Activated naive CD4-positive, alpha-beta T cell treated with anti-CD3 and anti-CD28 coated beads for 36 hours (primary cell): ENCODE measurements at regions of chr9 and their contacts with region 1.

Region 1: GRCh38 chr9:104961238-104961637 is 33.3 kb upstream of the ABCA1 start:
- DNase-seq: peak; percentile 92
- H3K4me3 Mint-ChIP-seq: peak overlapping the region; percentile 62
- H3K27ac Mint-ChIP-seq: peak overlapping the region; percentile 96
- H3K4me1 Mint-ChIP-seq: peaks cover 39% of the 10 kb centered on the region
- H3K27me3 Mint-ChIP-seq: no peaks in the 10 kb centered on the region

Region 2: GRCh38 chr9:104941597-104941996 is 19.6 kb before region 1 on chr9:
- CTCF ChIA-PET with region 1: no interaction called
- intact Hi-C with region 1: loop called (anchors 1 kb)
- DNase-seq: no peak
- H3K4me3 Mint-ChIP-seq: no peak overlapping the region
- H3K27ac Mint-ChIP-seq: peak overlapping the region; percentile 21
- H3K4me1 Mint-ChIP-seq: peaks cover 13% of the 10 kb centered on the region
- H3K27me3 Mint-ChIP-seq: no peaks in the 10 kb centered on the region

Region 3: DNA sequence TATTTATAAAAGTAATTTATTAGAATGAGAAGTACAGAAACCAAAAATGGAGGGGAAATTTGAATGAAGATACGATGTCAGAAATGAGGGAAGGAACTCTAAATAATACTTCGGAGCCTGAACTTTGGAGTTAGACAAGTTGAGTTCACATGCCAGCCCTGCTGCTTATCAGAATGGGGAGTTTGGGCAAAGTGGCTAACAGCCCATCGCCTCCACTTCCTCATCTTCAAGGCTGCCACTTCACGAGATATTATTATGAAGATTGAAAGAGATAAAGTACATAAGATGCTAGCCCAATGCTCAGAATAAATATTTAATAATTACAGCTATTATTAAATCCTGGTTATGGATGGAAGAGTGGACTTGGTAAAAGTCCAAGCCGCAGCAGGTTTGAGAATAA is 22.9 kb after region 1 on chr9:
- CTCF ChIA-PET with region 1: interaction called, 9 read pairs
- intact Hi-C with region 1: loop called (anchors 1 kb)
- DNase-seq: no peak
- H3K4me3 Mint-ChIP-seq: no peak overlapping the region
- H3K27ac Mint-ChIP-seq: peak overlapping the region; percentile 94
- H3K4me1 Mint-ChIP-seq: peaks cover 70% of the 10 kb centered on the region
- H3K27me3 Mint-ChIP-seq: peaks cover 8% of the 10 kb centered on the region

Region 4: GRCh38 chr9:105007143-105007542 is 45.9 kb after region 1 on chr9:
- CTCF ChIA-PET with region 1: no interaction called
- intact Hi-C with region 1: loop called (anchors 1 kb)
- DNase-seq: peak; percentile 54
- H3K4me3 Mint-ChIP-seq: no peak overlapping the region
- H3K27ac Mint-ChIP-seq: no peak overlapping the region
- H3K4me1 Mint-ChIP-seq: peaks cover 7% of the 10 kb centered on the region
- H3K27me3 Mint-ChIP-seq: no peaks in the 10 kb centered on the region